HEK293 (cell line): ENCODE measurements at regions of chr17 and their contacts with region 1.

Region 1: DNA sequence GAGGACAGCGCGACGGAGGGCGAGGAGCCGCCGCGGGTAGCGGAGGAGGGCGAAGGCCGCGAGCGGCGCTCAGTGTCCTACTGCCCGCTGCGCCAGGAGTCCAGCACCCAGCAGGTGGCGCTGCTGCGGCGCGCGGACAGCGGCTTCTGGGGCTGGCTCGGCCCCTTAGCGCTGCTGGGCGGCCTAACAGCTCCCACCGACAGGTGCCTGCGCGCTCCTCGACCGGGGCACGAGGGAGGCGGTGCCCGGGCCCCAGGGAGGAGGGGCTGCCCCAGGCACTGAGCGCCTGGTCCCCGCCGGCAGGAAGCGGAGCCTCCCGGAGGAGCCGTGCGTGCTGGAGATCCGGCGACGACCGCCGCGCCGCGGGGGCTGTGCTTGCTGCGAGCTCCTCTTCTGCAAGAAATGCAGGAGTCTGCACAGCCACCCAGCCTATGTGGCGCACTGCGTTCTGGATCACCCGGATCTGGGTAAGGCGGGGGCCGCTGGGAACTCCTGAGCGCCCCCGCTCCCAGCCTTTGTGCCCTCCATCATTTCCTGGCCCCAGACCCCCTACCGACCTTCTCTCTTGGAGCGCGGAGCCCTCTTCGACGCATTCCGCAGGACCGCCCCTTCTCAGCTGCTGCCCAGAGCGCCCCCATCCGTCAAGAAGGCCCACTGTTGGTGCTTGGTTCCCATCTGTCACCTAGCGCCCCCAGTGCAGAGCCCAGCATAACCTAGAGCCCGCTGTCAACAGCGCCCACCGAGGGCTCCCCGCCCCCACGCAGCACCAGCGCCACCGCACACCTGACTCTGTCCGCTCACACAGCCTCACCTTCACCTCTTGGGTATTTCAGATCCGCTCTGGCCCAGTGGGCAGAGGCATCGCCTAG is 3.7 kb downstream of the C17orf50 start:
- H3K4me3 ChIP-seq: peak overlapping the region; percentile 29
- H3K27ac ChIP-seq: peak overlapping the region; percentile 60; the same call in 1 of the 2 replicates
- H3K4me1 ChIP-seq: no peaks in the 10 kb centered on the region; the same call in 1 of the 2 replicates
- CTCF ChIP-seq: peak; percentile 97

Region 2: GRCh38 chr17:35612924-35613521 is 151.3 kb before region 1 on chr17:
- CTCF ChIA-PET with region 1: interaction called, 28 read pairs
- POLR2A ChIA-PET with region 1: no interaction called
- H3K4me3 ChIP-seq: no peak overlapping the region
- H3K27ac ChIP-seq: no peak overlapping the region
- H3K4me1 ChIP-seq: peaks cover 6% of the 10 kb centered on the region
- CTCF ChIP-seq: peak; percentile 44; the same call in 1 of the 2 replicates

Region 3: GRCh38 chr17:35731239-35731931 is 33.0 kb before region 1 on chr17 and contains the start of gene RASL10B:
- CTCF ChIA-PET with region 1: interaction called, 11 read pairs
- POLR2A ChIA-PET with region 1: interaction called, 4 read pairs
- H3K4me3 ChIP-seq: peak within 1 kb of the TSS; percentile 38
- H3K27ac ChIP-seq: peak within 1 kb of the TSS; percentile 63; the same call in 1 of the 2 replicates
- H3K4me1 ChIP-seq: peaks cover 28% of the 10 kb centered on the region
- CTCF ChIP-seq: no peak

Region 4: DNA sequence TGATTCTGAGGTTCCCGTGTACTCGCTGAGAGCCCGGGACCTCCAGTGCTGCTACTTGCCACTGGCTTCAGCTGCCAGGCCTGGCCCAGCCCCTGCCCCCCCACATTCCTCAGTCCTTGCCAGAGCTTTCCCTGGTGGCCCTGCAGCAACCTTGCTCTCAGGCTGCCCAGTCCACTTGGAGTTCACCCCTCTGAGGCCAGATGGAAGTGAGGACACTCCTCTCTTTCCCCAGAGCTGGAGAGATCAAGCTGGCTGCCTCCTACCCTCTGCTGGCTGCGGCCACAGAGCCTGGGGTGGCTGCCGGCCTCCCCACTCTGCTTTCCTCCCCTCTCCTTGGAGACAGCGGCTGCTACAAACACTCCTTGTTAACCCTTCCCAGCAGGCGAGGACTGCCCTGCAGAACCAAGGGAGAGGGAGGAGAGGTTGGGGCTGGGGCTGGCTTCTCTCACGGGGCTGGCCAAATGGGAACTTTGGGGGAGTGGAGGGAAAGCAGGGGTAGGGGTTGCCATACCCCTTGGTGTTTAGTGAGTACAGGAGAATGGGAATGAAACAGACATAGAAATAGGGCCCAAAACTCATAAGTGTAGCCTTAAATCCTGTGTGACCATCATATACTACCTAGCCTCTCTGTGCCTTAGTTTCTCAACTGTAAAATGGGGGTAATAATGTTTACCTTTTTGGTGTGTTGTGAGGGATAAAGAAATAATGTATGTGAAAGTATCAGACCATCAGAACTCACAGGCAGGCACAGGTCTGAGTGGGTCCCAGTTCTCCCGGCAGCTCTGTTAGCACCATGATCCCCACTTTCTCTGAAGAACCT is 11.2 kb before region 1 on chr17 and contains the start of gene GAS2L2:
- CTCF ChIA-PET with region 1: interaction called, 53 read pairs
- POLR2A ChIA-PET with region 1: interaction called, 4 read pairs
- H3K4me3 ChIP-seq: no peak within 1 kb of the TSS
- H3K27ac ChIP-seq: no peak within 1 kb of the TSS
- H3K4me1 ChIP-seq: no peaks in the 10 kb centered on the region
- CTCF ChIP-seq: no peak

Region 5: GRCh38 chr17:35788504-35789368 is 24.4 kb after region 1 on chr17:
- CTCF ChIA-PET with region 1: interaction called, 104 read pairs
- POLR2A ChIA-PET with region 1: interaction called, 5 read pairs
- H3K4me3 ChIP-seq: no peak overlapping the region
- H3K27ac ChIP-seq: no peak overlapping the region
- H3K4me1 ChIP-seq: no peaks in the 10 kb centered on the region
- CTCF ChIP-seq: no peak

Region 6: DNA sequence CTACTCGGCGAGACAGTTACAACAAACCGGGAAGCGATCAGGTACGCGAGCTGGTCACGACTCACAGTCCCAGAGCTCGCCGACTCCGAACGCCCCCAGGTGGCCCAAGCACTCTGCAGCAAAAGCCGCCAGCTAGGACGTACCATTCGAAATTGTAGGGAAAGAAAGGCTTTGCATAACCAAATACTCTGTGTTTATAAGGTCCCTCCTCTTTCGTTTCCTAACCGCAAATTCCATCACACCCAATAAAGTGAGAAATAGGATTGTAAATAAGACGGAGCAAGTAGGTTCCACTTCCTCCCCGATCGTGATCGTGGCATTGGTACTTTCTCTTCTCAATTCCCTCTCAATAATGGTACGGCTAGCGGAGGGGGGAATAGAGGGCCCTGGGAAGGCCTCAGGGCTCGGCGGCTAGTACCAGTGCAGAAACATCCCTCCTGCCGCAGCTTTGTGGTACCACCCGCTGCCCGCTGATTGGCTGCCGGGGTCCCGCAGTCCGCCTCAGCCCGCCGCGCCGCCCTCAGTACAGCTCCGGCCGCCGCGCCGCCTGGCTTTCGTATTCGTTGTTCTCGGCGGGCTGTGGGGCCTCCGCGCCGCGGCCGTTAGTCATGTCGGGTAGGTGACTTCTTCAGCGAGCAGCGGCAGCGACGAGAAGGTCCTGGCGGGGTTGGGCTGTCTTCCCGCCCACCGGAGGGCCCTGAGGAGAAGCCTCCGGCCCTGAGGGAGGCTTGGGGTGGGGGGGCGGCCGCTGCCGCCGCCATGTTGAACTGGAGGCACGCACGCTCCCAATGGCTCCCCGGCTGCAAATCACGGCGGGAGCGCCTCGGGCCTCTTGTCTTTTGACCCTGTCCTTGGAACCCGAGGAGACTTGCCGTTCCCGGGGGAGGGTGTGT is 44.9 kb after region 1 on chr17 and contains the start of gene TAF15:
- CTCF ChIA-PET with region 1: interaction called, 118 read pairs
- POLR2A ChIA-PET with region 1: interaction called, 85 read pairs
- H3K4me3 ChIP-seq: peak within 1 kb of the TSS; percentile 98
- H3K27ac ChIP-seq: peak within 1 kb of the TSS; percentile 96
- H3K4me1 ChIP-seq: peaks cover 15% of the 10 kb centered on the region
- CTCF ChIP-seq: peak; percentile 88

Region 7: DNA sequence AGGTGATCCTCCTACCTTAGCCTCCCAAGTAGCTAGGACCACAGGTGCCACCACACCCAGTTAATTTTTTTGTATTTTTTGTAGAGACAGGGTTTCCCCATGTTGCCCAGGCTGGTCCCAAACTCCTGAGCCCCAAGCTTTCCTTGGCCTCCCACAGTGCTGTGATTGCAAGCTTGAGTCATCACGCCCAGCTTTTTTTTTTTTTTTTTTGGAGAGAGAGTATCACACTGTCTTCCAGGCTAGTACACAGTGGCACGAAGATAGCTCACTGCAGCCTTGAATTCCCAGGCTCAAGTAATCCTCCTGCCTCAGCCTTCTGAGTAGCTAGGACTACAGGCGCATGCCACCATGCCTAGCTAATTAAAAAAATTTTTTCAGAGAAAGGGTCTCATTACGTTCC is 77.1 kb after region 1 on chr17:
- CTCF ChIA-PET with region 1: interaction called, 16 read pairs
- POLR2A ChIA-PET with region 1: no interaction called
- H3K4me3 ChIP-seq: no peak overlapping the region
- H3K27ac ChIP-seq: no peak overlapping the region
- H3K4me1 ChIP-seq: no peaks in the 10 kb centered on the region
- CTCF ChIP-seq: no peak

Region 8: GRCh38 chr17:36072431-36073121 is 308.2 kb after region 1 on chr17:
- CTCF ChIA-PET with region 1: no interaction called
- POLR2A ChIA-PET with region 1: no interaction called
- H3K4me3 ChIP-seq: no peak overlapping the region
- H3K27ac ChIP-seq: no peak overlapping the region
- H3K4me1 ChIP-seq: no peaks in the 10 kb centered on the region
- CTCF ChIP-seq: peak; percentile 53; the same call in 1 of the 2 replicates